ENCODE measurements at regions of chr1 and their contacts with region 1.

Region 1: DNA sequence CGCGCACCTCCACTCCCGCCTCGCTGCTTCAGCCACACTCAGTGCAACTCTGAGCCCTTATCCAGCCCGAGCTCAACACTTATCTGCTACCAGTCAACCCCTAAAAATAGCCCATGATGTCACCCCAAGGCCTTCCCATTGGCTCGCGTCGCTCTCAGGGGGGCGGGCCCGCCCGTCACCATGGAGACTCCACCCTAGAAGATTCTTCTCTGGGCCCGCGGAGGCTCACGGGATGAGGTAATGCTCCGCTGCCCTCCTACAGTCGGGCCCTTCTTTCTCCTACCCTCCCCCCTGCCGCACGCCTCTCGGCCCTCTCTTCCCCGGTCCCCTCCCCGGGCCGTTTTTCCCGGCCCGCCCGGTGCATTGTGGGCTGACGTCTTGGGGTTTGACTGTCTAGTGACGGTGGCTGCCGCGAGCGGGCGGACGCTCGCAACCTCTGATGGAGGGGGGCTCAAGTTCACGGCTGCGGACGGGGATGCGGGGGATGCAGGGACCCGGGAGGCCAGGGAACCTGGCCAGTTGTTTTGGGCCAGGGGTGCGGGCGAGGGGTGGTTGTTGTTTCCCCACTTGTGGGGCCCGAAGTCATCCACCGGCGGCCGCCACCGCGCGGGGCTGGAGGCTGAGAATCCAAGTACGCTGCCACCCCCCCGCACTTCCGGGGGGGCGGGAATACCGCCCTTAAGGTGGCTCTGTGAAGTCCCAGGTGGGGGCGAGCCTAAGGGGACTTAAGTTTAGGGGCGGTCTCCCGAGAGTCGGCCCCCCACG is at the start of gene JUN:
- DNase-seq: peak; percentile 100
- ATAC-seq: peak; percentile 71
- H3K4me3 ChIP-seq: peak within 1 kb of the TSS; percentile 65 to 99 (median 98)
- H3K4me3 Mint-ChIP-seq: peak within 1 kb of the TSS; percentile 90
- H3K27ac ChIP-seq: peak within 1 kb of the TSS; percentile 100
- H3K27ac Mint-ChIP-seq: peak within 1 kb of the TSS; percentile 97
- H3K4me1 ChIP-seq: peaks cover 16 to 27% of the 10 kb centered on the region in 2 donors
- H3K4me1 Mint-ChIP-seq: peaks cover 39% of the 10 kb centered on the region
- H3K27me3 ChIP-seq: no peaks in the 10 kb centered on the region
- H3K27me3 Mint-ChIP-seq: no peaks in the 10 kb centered on the region
- CTCF ChIP-seq: no peak
- total RNA-seq, gene JUN: 94.4 and 95.3 TPM in 2 replicates

Region 2: GRCh38 chr1:58699011-58699762 is 85.0 kb before region 1 on chr1:
- CTCF ChIA-PET with region 1: no interaction called
- POLR2A ChIA-PET with region 1: no interaction called
- intact Hi-C with region 1: loop called (anchors 5 kb)
- DNase-seq: no peak
- ATAC-seq: no peak
- H3K4me3 ChIP-seq: peak overlapping the region; percentile 61 to 99 (median 93)
- H3K4me3 Mint-ChIP-seq: peak overlapping the region; percentile 96
- H3K27ac ChIP-seq: peak overlapping the region; percentile 79 to 90
- H3K27ac Mint-ChIP-seq: peak overlapping the region; percentile 98
- H3K4me1 ChIP-seq: peaks cover 14 to 17% of the 10 kb centered on the region in 2 donors
- H3K4me1 Mint-ChIP-seq: peaks cover 23% of the 10 kb centered on the region
- H3K27me3 ChIP-seq: no peaks in the 10 kb centered on the region
- H3K27me3 Mint-ChIP-seq: no peaks in the 10 kb centered on the region
- CTCF ChIP-seq: no peak

Region 3: GRCh38 chr1:58805716-58806571 is 21.8 kb after region 1 on chr1:
- CTCF ChIA-PET with region 1: interaction called, 10 read pairs
- POLR2A ChIA-PET with region 1: interaction called, 36 read pairs
- intact Hi-C with region 1: loop called (anchors 1 kb)
- DNase-seq: peak; percentile 73
- ATAC-seq: peak; percentile 91
- H3K4me3 ChIP-seq: peak overlapping the region in 2 of 5 experiments; percentile 20 to 21
- H3K4me3 Mint-ChIP-seq: peak overlapping the region; percentile 72
- H3K27ac ChIP-seq: peak overlapping the region; percentile 41 to 89
- H3K27ac Mint-ChIP-seq: peak overlapping the region; percentile 93
- H3K4me1 ChIP-seq: peaks cover 49 to 51% of the 10 kb centered on the region in 2 donors
- H3K4me1 Mint-ChIP-seq: peaks cover 58% of the 10 kb centered on the region
- H3K27me3 ChIP-seq: no peaks in the 10 kb centered on the region
- H3K27me3 Mint-ChIP-seq: no peaks in the 10 kb centered on the region
- CTCF ChIP-seq: no peak

Region 4: GRCh38 chr1:58903514-58904298 is 119.5 kb after region 1 on chr1:
- CTCF ChIA-PET with region 1: interaction called, 6 read pairs
- POLR2A ChIA-PET with region 1: interaction called, 7 read pairs
- intact Hi-C with region 1: loop called (anchors 1 kb)
- DNase-seq: peak; percentile 77
- ATAC-seq: peak; percentile 88
- H3K4me3 ChIP-seq: peak overlapping the region; percentile 45 to 74 (median 60)
- H3K4me3 Mint-ChIP-seq: peak overlapping the region; percentile 85
- H3K27ac ChIP-seq: peak overlapping the region; percentile 49 to 82
- H3K27ac Mint-ChIP-seq: peak overlapping the region; percentile 86
- H3K4me1 ChIP-seq: peaks cover 10% of the 10 kb centered on the region in 2 donors
- H3K4me1 Mint-ChIP-seq: peaks cover 13% of the 10 kb centered on the region
- H3K27me3 ChIP-seq: no peaks in the 10 kb centered on the region
- H3K27me3 Mint-ChIP-seq: no peaks in the 10 kb centered on the region
- CTCF ChIP-seq: no peak

Region 5: DNA sequence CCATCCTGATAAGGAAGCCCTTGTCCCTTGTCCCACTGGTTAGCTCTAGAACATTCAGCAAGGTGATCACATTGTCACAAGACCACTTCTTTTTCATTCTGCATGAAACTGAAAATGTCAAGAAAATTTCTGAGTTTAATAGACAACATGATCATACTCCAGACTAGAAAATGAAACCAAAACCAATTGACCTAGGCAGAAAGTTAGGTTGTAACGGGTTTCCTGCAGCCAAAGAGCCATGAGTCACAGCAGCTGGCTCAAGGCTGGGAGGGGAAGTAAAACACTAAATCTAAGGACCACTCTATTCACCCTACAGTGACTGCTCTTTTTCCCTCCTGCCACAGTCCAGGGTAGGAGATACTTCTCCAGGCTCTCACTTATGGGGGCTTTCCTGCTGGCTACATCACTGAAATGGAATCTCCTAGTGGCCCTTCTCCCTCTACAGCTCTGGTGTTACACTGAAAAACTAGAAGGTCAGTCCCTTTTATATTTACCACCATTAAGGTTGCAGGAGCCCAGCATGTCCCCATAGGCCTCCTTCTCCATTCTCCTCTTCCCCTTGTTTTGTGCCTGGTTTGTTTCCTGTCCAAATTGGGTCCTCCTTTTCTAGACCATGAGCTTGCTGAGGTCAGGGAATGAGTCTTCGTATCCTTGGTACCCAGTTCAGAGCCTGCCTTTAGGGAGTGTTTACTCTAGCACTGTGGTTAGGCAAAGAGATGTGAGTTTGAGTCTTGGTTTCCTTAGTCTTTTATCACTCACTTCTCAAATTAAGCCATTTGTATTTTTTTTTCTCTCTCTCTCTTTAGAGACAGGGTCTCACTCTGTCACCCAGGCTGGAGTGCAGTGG is 236.2 kb after region 1 on chr1:
- CTCF ChIA-PET with region 1: interaction called, 4 read pairs
- POLR2A ChIA-PET with region 1: interaction called, 5 read pairs
- intact Hi-C with region 1: loop called (anchors 1 kb)
- DNase-seq: peak; percentile 83
- ATAC-seq: peak; percentile 94
- H3K4me3 ChIP-seq: peak overlapping the region in 3 of 5 experiments; percentile 18 to 41 (median 33)
- H3K4me3 Mint-ChIP-seq: peak overlapping the region; percentile 76
- H3K27ac ChIP-seq: peak overlapping the region; percentile 81 to 82
- H3K27ac Mint-ChIP-seq: peak overlapping the region; percentile 96
- H3K4me1 ChIP-seq: peaks cover 22 to 38% of the 10 kb centered on the region in 2 donors
- H3K4me1 Mint-ChIP-seq: peaks cover 48% of the 10 kb centered on the region
- H3K27me3 ChIP-seq: no peaks in the 10 kb centered on the region
- H3K27me3 Mint-ChIP-seq: no peaks in the 10 kb centered on the region
- CTCF ChIP-seq: no peak

Region 6: DNA sequence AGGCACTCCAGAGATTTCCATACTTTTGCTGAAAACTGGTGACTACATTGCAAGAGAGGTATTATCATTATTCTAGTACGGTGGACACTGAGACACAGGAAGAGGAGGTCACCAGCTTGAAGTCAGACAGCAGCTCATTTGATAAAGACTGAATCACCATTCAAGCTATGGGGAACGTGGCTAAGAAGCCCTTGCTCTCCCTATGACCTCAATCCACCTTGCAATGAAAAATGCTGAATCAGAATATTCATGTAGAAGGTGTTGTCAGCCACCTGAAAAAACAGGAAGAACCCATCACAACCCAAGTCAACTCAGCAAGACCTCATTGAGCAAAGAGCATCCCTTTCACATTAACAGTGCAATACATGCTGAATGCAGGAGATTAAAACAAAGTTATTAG is 453.7 kb after region 1 on chr1:
- CTCF ChIA-PET with region 1: no interaction called
- POLR2A ChIA-PET with region 1: interaction called, 11 read pairs
- intact Hi-C with region 1: no loop called
- DNase-seq: no peak
- ATAC-seq: no peak
- H3K4me3 ChIP-seq: no peak overlapping the region
- H3K4me3 Mint-ChIP-seq: no peak overlapping the region
- H3K27ac ChIP-seq: no peak overlapping the region
- H3K27ac Mint-ChIP-seq: no peak overlapping the region
- H3K4me1 ChIP-seq: no peaks in the 10 kb centered on the region
- H3K4me1 Mint-ChIP-seq: no peaks in the 10 kb centered on the region
- H3K27me3 ChIP-seq: no peaks in the 10 kb centered on the region
- H3K27me3 Mint-ChIP-seq: no peaks in the 10 kb centered on the region
- CTCF ChIP-seq: no peak

Region 7: GRCh38 chr1:60088620-60089155 is 1304.5 kb after region 1 on chr1:
- CTCF ChIA-PET with region 1: no interaction called
- POLR2A ChIA-PET with region 1: no interaction called
- intact Hi-C with region 1: no loop called
- DNase-seq: no peak
- ATAC-seq: no peak
- H3K4me3 ChIP-seq: no peak overlapping the region
- H3K4me3 Mint-ChIP-seq: no peak overlapping the region
- H3K27ac ChIP-seq: no peak overlapping the region
- H3K27ac Mint-ChIP-seq: no peak overlapping the region
- H3K4me1 ChIP-seq: no peaks in the 10 kb centered on the region
- H3K4me1 Mint-ChIP-seq: no peaks in the 10 kb centered on the region
- H3K27me3 ChIP-seq: no peaks in the 10 kb centered on the region
- H3K27me3 Mint-ChIP-seq: no peaks in the 10 kb centered on the region
- CTCF ChIP-seq: no peak